Activated B cell treated with CpG ODN at 0.5 μM for 24 hours (primary cell): ENCODE measurements at regions of chr9 and their contacts with region 1.

Region 1: GRCh38 chr9:89428901-89429890 is 68.7 kb downstream of the SEMA4D start:
- DNase-seq: no peak
- ATAC-seq: peak; percentile 48
- H3K4me3 Mint-ChIP-seq: no peak overlapping the region
- H3K27ac Mint-ChIP-seq: peak overlapping the region; percentile 63
- H3K4me1 Mint-ChIP-seq: peaks cover 93% of the 10 kb centered on the region
- H3K27me3 Mint-ChIP-seq: no peaks in the 10 kb centered on the region
- CTCF ChIP-seq: no peak

Region 2: DNA sequence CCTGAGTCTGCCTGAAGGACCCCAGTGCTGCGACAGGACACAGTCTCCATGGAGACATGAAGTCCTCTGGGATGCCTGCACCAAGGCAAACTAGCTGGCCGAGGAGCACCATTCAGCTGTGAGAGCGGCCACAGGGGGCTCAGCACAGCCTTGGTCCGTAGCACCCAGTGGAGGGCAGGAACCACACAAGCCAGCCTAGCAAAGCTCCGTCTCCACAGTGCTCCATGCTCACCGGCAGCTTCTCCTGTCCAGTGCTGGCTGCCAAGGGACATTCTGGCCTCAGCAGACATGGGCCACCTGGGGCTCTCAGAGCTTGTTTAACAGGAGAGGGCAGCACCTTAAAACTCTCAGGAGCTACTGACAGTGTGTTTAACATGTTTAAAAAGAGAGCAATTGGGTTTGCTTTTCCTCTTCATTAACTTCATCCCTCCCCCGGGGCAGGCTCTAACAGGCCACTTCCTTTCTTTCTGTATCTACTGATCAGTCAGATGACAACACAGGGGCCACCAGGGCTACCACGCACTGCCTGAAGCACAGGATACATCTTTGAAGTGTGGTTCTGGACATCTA is 53.9 kb before region 1 on chr9:
- CTCF ChIA-PET with region 1: interaction called, 4 read pairs
- POLR2A ChIA-PET with region 1: no interaction called
- intact Hi-C with region 1: loop called (anchors 5 kb)
- DNase-seq: no peak
- ATAC-seq: peak; percentile 89
- H3K4me3 Mint-ChIP-seq: peak overlapping the region; percentile 55
- H3K27ac Mint-ChIP-seq: peak overlapping the region; percentile 89
- H3K4me1 Mint-ChIP-seq: peaks cover 28% of the 10 kb centered on the region
- H3K27me3 Mint-ChIP-seq: no peaks in the 10 kb centered on the region
- CTCF ChIP-seq: no peak

Region 3: DNA sequence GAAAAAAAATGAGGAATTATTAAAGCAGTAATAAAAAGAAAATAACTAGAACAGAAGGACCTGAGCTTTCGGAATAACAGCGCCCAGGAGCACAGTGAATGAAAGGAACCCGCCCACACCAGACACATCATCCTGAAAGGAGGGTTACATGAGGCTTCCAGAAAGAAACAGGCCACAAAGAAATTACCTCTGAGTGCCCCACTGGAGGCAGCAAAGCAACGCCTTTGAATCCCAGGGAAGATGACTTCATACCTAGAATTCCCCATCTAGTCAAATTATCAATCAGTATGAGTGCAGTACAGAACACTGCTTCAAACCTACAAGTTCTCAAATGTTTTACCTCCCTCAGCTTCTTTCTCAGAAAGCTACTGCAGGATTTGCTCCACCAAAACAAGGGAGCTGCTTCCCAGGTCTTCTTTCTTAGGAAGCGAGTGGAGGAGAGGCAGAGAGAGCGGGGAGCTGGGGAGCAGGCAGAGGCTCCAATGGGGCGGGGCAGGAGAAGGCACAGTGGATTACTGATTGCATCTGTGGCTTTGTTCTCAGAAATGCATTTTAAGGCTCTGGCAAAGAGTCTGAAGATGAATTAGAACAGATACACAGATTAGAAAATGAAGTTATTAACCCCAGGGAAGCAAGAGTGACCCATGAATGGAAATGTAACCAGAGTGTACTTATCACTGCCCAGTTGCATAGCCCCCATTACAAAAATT is 18.4 kb before region 1 on chr9:
- CTCF ChIA-PET with region 1: interaction called, 8 read pairs
- POLR2A ChIA-PET with region 1: interaction called, 12 read pairs
- intact Hi-C with region 1: no loop called
- DNase-seq: no peak
- ATAC-seq: peak; percentile 20
- H3K4me3 Mint-ChIP-seq: no peak overlapping the region
- H3K27ac Mint-ChIP-seq: peak overlapping the region; percentile 35
- H3K4me1 Mint-ChIP-seq: peaks cover 58% of the 10 kb centered on the region
- H3K27me3 Mint-ChIP-seq: no peaks in the 10 kb centered on the region
- CTCF ChIP-seq: no peak

Region 4: GRCh38 chr9:89464300-89464901 is 35.2 kb after region 1 on chr9:
- CTCF ChIA-PET with region 1: no interaction called
- POLR2A ChIA-PET with region 1: no interaction called
- intact Hi-C with region 1: loop called (anchors 2 kb)
- DNase-seq: peak; percentile 23
- ATAC-seq: peak; percentile 49
- H3K4me3 Mint-ChIP-seq: peak overlapping the region; percentile 72
- H3K27ac Mint-ChIP-seq: peak overlapping the region; percentile 80
- H3K4me1 Mint-ChIP-seq: peaks cover 90% of the 10 kb centered on the region
- H3K27me3 Mint-ChIP-seq: no peaks in the 10 kb centered on the region
- CTCF ChIP-seq: no peak

Region 5: GRCh38 chr9:89497978-89498851 is 69.0 kb after region 1 on chr9 and contains the start of gene SEMA4D:
- CTCF ChIA-PET with region 1: no interaction called
- POLR2A ChIA-PET with region 1: interaction called, 3 read pairs
- intact Hi-C with region 1: loop called (anchors 5 kb)
- DNase-seq: peak; percentile 29
- ATAC-seq: peak; percentile 49
- H3K4me3 Mint-ChIP-seq: peak within 1 kb of the TSS; percentile 92
- H3K27ac Mint-ChIP-seq: peak within 1 kb of the TSS; percentile 91
- H3K4me1 Mint-ChIP-seq: peaks cover 79% of the 10 kb centered on the region
- H3K27me3 Mint-ChIP-seq: no peaks in the 10 kb centered on the region
- CTCF ChIP-seq: no peak
- total RNA-seq, gene SEMA4D: 68.0 and 79.7 TPM in 2 replicates

Region 6: GRCh38 chr9:89542401-89543021 is 113.3 kb after region 1 on chr9:
- CTCF ChIA-PET with region 1: interaction called, 120 read pairs
- POLR2A ChIA-PET with region 1: interaction called, 13 read pairs
- intact Hi-C with region 1: no loop called
- DNase-seq: no peak
- ATAC-seq: peak; percentile 67
- H3K4me3 Mint-ChIP-seq: peak overlapping the region; percentile 52
- H3K27ac Mint-ChIP-seq: peak overlapping the region; percentile 46
- H3K4me1 Mint-ChIP-seq: peaks cover 32% of the 10 kb centered on the region
- H3K27me3 Mint-ChIP-seq: no peaks in the 10 kb centered on the region
- CTCF ChIP-seq: no peak